HEK293T (cell line): ENCODE measurements at regions of chr14 and their contacts with region 1.

Region 1: GRCh38 chr14:74860906-74861733 is 14.8 kb downstream of the PROX2 start:
- DNase-seq: peak; percentile 87

Region 2: DNA sequence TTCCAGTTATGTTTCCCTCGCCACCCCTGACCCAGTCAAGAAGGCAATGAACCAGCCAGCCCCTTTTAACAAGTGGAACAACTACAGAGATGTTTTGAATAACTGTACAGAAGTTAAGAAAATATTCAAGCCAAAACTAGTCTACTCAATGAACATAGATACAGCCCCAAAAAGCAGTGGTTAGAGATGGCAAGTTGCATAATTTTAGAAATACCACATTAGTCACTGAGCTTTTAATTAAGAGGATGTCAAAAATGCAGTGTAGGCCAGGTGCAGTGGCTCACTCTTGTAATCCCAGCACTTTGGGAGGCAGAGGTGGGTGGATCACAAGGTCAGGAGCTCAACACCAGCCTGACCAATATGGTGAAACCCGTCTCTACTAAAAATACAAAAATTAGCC is 12.4 kb before region 1 on chr14:
- CTCF ChIA-PET with region 1: interaction called, 12 read pairs
- POLR2A ChIA-PET with region 1: no interaction called
- DNase-seq: no peak

Region 3: DNA sequence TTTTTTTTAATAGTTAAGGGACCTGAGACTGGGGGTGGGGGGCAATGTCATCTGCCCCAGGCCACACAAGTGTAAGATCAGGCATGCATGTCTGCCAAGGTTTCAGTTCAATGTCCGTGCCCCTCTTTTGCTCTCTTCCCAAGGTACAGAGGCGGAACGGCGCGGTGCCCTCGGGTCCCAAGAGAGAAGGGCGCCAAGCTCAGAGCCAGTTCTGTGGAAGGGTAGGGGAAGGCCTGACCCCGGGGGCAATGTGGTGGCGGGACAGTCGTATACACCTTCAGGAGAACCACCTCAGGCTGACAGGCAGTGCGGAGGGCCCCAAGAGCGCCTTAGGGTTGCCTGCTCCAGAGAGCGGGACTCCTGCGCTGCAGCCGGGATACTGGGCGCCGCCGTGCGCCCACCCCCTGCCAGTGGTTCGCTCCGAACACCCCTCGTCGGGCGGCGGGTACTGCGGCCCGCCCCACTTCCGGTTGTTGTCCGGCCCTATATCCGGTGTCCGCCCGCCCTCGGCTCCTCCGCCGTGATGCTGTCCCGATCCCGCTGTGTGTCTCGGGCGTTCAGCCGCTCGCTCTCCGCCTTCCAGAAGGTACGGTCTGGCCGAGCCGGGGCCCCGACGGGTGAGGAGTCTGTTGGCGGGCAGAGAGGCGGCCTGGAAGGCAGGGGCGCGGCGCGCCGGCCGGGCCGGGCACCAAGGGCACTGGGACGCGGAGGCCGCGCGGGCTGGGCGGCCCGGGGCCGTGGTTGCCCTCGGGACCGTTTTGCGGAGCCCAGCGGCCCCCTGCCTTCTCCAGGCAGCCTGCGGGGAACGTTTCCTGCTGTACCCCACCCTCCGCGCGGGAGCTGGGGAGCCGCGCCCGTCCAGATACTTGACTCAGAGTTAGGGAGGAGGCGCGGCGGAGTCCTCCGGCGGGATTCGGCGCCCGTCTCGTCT is 20.6 kb after region 1 on chr14 and contains the start of gene DLST:
- CTCF ChIA-PET with region 1: interaction called, 59 read pairs
- POLR2A ChIA-PET with region 1: interaction called, 35 read pairs
- DNase-seq: peak; percentile 94

Region 4: DNA sequence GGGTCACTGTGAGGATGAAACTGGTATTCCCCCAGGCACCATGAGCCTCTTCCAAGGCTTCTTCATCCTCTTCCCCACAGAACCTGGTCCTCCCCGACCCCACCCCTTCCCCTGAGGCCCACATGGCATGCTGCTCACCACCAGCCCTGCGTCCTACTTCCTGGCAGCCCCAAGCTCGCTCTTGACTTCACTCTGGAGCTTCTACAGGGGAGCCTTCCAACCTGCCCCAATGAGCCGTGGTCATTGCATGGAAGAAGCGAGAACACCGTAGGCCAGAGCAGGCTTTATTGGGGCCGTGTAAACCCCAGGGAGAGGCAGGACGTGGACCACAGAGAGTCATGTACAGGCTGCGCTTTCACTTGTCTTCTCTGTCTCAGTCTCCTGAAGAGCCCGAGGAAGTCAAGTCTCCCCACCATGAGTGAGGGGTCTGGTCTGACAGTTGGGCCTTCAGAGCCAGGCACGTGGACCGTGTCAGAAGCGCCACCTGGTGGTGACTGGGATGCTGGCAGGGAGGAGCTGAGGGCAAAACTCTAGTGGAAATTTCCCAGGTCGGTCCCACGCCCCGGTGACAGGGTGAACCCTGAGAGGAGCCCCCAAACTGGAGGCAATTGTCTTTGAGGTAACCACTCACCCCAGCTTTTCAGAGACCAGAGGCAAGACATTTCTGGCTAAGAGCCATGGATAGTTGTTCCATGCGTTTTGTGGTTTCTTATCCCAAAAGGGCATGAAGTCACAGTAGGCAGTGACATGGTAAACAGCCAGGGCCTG is 44.4 kb after region 1 on chr14:
- CTCF ChIA-PET with region 1: interaction called, 61 read pairs
- POLR2A ChIA-PET with region 1: interaction called, 5 read pairs
- DNase-seq: peak; percentile 75

Region 5: DNA sequence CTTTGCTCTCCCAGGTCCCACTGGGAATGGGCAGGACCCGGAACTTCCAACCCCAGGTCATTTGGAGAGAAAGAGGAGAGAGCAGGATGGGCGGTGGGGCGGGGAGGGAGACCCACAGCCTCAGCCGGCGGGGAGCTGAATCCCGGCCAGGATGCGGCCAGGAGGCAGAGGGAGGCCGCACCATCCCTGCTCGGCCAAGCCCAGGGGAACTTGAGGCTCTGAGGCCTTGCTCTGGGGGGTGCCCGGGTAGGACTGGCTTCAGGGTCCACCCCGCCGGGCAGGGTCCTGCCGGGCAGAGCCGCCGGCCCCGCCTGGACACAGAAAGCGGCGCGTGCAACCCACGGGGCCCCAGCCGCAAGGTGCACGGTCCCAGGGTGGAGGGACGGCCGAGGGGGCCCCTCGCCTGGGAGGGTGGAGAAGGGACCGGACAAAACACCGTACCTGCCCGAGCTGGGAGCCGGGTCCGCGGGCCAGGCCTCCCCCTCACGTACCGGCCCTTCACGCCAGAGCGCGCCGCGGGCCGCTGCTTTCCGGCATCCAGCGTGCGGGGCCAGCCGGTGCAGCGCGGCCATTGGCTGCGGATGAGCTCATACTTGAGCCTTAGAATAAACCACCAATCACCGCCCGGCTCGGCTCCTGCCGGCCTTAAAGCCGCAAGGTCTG is 61.8 kb after region 1 on chr14 and contains the start of gene RPS6KL1:
- CTCF ChIA-PET with region 1: interaction called, 16 read pairs
- POLR2A ChIA-PET with region 1: no interaction called
- DNase-seq: peak; percentile 97

Region 6: DNA sequence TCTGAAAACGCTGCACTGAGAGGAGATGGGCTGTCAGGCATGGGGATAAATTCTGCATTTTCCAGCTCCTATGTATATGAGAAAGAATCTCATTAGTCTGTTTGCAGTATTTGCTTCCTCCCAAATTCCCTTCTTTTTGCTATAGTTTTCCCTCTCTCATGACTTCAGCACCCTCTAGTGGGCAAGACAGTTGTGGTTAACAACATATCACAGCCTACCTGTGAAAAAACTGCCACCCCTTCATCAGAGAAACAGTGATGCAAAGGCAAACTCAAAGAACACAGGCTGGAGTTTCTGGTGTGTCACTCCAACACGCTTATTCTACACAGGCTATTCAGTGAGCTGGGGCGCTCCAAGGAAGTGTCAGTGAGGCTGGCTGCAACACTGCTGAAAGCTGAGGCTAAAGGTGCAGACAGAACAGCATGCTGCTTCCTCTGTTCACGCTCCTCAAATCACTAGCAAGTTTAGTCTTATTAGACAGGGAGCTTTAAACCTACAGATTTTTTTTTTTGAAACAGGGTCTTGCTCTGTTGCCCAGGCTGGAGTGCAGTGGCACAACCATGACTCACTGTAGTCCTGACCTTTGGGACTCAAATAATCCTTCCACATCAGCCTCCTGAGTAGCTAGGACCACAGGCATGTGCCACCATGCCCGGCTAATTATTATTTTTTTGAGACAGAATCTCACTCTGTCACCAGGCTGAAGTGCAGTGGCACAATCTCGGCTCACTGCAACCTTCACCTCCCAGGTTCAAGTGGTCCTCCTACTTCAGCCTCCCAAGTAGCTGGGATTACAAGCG is 227.7 kb after region 1 on chr14:
- CTCF ChIA-PET with region 1: interaction called, 11 read pairs
- POLR2A ChIA-PET with region 1: no interaction called
- DNase-seq: peak; percentile 59